H1 (cell line): ENCODE measurements at regions of chr20 and their contacts with region 1.

Region 1: DNA sequence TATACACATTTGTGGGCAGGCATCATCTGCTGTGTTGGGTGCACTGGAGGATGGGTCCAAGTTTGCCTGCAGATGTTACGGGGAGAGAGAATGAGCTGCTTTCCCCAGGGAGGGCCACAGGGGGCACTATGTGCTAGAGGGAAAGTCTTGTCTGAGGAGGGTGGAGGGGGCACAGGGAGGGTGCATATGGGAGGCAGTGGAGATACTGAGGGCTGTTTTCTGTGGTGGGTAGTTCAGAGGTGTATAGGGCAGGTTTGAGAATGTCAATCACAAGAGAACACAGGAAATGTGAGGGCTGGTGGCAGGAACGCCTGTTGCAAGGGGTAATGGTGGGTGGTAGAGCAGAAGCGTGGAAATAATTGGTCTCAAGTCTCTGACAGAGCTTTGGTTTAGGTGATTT is 7.7 kb upstream of the PTPRA start:
- DNase-seq: peak in 1 of 2 experiments; percentile 73
- H3K4me3 ChIP-seq: no peak overlapping the region
- H3K27ac ChIP-seq: no peak overlapping the region
- H3K4me1 ChIP-seq: no peaks in the 10 kb centered on the region; a peak in 1 of 7 replicates
- H3K27me3 ChIP-seq: no peaks in the 10 kb centered on the region; a peak in 2 of 7 replicates
- CTCF ChIP-seq: peak; percentile 66 to 74 (median 72)
- EP300 ChIP-seq: no peak
- POLR2A ChIP-seq: no peak
- RAD21 ChIP-seq: peak; percentile 74 to 76

Region 2: DNA sequence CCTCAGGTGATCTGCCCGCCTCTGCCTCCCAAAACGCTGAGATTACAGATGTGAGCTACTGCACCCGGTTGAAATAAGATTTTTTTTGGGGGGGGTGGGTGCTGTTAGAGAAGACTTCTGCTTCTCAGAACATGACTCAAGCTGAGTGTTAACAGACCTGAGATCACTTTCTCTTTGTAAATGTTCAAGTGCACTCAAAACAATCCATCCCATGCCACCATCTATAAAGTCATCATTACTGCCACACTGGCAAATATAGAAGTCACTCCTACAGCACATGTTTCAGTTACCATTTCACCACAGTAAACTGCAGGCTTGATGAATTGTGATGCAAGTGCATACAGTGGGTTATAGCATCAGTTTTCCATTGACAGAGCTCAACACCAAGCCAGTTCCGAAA is 16.1 kb before region 1 on chr20:
- CTCF ChIA-PET with region 1: interaction called, 23 read pairs
- POLR2A ChIA-PET with region 1: interaction called, 3 read pairs
- DNase-seq: no peak
- H3K4me3 ChIP-seq: no peak overlapping the region
- H3K27ac ChIP-seq: no peak overlapping the region
- H3K4me1 ChIP-seq: peaks cover 0 to 4% (median 0%) of the 10 kb centered on the region in 4 experiments; a peak in 3 of 7 replicates
- H3K27me3 ChIP-seq: no peaks in the 10 kb centered on the region
- CTCF ChIP-seq: no peak
- EP300 ChIP-seq: no peak
- POLR2A ChIP-seq: no peak
- RAD21 ChIP-seq: no peak

Region 3: DNA sequence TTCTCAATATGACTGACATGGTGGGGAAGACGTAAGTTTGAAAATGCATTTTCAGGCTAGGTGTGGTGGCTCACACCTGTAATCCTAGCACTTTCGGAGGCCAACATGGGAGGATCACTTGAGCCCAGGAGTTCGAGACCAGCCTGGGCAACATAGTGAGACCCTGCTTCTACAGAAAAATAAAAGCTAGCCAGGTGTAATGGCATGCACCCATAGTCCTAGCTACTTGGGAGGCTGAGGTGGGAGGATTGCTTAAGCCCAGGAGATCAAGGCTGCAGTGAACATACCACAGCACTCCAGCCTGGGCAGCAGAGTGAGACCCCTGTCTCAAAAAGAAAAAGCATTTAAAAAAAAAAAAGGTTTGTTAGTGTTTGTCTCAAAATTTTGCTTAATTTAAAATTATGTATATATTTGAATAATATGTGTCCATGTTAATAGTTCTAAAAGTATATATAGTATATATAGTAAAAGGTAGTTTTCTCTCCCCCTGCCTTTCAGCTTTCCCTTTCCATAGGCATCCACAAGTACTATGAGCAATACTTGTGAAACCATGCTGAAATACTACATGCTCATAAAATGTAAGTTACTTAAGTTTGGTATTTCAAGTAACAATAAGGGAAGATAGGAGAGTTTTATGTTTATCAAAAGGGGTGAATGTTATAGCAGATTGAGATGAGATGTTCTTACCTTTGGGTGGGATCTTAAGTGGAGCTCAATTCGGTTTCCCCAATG is 22.8 kb after region 1 on chr20:
- CTCF ChIA-PET with region 1: interaction called, 10 read pairs
- POLR2A ChIA-PET with region 1: no interaction called
- DNase-seq: no peak
- H3K4me3 ChIP-seq: no peak overlapping the region
- H3K27ac ChIP-seq: no peak overlapping the region
- H3K4me1 ChIP-seq: no peaks in the 10 kb centered on the region
- H3K27me3 ChIP-seq: no peaks in the 10 kb centered on the region
- CTCF ChIP-seq: no peak
- EP300 ChIP-seq: no peak
- POLR2A ChIP-seq: no peak
- RAD21 ChIP-seq: no peak

Region 4: DNA sequence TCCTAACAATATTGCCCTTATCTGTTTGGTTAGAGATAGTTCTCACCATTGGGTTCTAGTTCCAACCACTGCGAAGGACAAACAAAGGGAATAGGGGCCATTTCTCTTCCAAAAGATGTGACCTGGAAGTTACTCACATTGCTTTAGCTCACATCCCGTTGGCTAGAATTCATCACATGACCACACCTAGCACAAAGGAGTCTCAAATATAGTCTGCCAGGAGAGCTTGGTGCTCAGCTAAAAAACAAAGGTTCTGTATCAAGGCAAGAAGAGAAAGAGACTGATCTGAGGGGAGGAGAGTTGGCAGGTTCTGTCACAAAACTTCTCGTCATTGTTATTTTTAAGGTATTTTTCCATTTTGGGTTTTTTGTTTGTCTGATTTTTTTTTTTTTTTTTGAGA is 107.9 kb after region 1 on chr20:
- CTCF ChIA-PET with region 1: interaction called, 10 read pairs
- POLR2A ChIA-PET with region 1: no interaction called
- DNase-seq: peak in 1 of 2 experiments; percentile 40
- H3K4me3 ChIP-seq: no peak overlapping the region
- H3K27ac ChIP-seq: no peak overlapping the region
- H3K4me1 ChIP-seq: peaks cover 0 to 1% (median 0%) of the 10 kb centered on the region in 4 experiments; a peak in 2 of 7 replicates
- H3K27me3 ChIP-seq: no peaks in the 10 kb centered on the region
- CTCF ChIP-seq: no peak
- EP300 ChIP-seq: no peak
- POLR2A ChIP-seq: no peak
- RAD21 ChIP-seq: no peak

Region 5: GRCh38 chr20:2981662-2982061 is 116.0 kb after region 1 on chr20:
- CTCF ChIA-PET with region 1: interaction called, 13 read pairs
- POLR2A ChIA-PET with region 1: no interaction called
- DNase-seq: peak in 1 of 2 experiments; percentile 19
- H3K4me3 ChIP-seq: no peak overlapping the region
- H3K27ac ChIP-seq: no peak overlapping the region
- H3K4me1 ChIP-seq: peaks cover 0 to 1% (median 0%) of the 10 kb centered on the region in 4 experiments; a peak in 2 of 7 replicates
- H3K27me3 ChIP-seq: no peaks in the 10 kb centered on the region
- CTCF ChIP-seq: no peak
- EP300 ChIP-seq: no peak
- POLR2A ChIP-seq: no peak
- RAD21 ChIP-seq: no peak

Region 6: DNA sequence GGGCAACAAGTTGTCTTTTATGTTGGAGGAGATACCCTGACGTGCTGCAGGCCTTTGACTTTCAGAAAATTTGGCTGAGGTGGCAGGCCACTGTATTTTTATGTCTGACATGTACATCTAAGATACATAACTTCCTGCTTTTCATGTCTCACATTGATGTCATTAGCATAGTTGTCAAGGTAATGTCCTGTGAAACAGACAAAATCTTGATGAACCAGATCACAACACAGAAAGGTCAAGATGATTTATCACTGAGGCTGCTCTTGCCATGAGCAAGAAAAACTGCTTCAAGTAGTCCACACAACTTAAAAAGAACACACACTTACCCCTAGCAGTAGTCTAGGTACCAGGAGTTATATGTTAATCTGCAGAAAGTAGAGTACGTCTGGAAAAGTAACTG is 127.6 kb after region 1 on chr20:
- CTCF ChIA-PET with region 1: interaction called, 13 read pairs
- POLR2A ChIA-PET with region 1: no interaction called
- DNase-seq: no peak
- H3K4me3 ChIP-seq: no peak overlapping the region
- H3K27ac ChIP-seq: no peak overlapping the region
- H3K4me1 ChIP-seq: no peaks in the 10 kb centered on the region
- H3K27me3 ChIP-seq: no peaks in the 10 kb centered on the region
- CTCF ChIP-seq: no peak
- EP300 ChIP-seq: no peak
- POLR2A ChIP-seq: no peak
- RAD21 ChIP-seq: no peak

Region 7: GRCh38 chr20:3000852-3001523 is 135.4 kb after region 1 on chr20:
- CTCF ChIA-PET with region 1: interaction called, 20 read pairs
- POLR2A ChIA-PET with region 1: no interaction called
- DNase-seq: no peak
- H3K4me3 ChIP-seq: no peak overlapping the region
- H3K27ac ChIP-seq: no peak overlapping the region
- H3K4me1 ChIP-seq: peaks cover 0 to 5% (median 2%) of the 10 kb centered on the region in 4 experiments; a peak in 1 of 7 replicates
- H3K27me3 ChIP-seq: no peaks in the 10 kb centered on the region
- CTCF ChIP-seq: peak in 2 of 3 experiments; percentile 45 to 53; a peak in 2 of 4 replicates
- EP300 ChIP-seq: no peak
- POLR2A ChIP-seq: no peak
- RAD21 ChIP-seq: peak; percentile 73 to 79